PC-9 (cell line): ENCODE measurements at regions of chr2 and their contacts with region 1.

Region 1: GRCh38 chr2:151032741-151033191 is 228.9 kb downstream of the RBM43 start:
- DNase-seq: no peak
- H3K4me3 ChIP-seq: no peak overlapping the region
- H3K27ac ChIP-seq: no peak overlapping the region
- H3K4me1 ChIP-seq: no peaks in the 10 kb centered on the region
- H3K27me3 ChIP-seq: no peaks in the 10 kb centered on the region
- CTCF ChIP-seq: no peak

Region 2: DNA sequence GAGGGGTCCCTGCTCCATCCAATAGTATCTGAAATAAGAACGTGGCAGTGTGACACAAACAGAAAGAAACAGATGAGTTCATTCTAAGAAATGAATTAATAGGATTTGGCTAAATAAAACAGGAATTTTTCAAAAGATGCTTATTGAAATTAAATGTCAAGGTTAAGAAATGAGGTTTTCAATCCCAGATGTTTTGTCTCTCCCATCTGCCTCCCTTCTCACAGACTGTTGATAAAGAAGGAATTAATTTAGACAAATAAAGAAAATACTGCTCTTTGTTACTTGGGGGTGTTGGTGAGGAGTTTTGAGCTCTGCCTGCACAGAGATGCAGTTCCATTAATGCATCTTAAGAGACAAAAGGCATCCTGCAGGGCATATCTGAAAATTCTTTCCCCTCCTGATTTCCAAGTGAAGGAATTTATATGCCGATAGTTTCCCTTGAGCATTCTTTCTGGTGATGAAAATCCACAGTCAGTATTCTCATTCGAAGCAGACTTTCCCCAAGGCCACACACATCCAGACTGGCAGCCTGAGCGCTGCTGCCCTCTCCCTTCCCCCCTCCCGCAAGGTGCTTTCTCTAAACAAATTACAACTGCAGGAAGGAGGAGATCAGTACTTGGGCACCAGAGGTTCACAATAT is 159.9 kb before region 1 on chr2:
- CTCF ChIA-PET with region 1: no interaction called
- POLR2A ChIA-PET with region 1: no interaction called
- intact Hi-C with region 1: no loop called
- DNase-seq: no peak
- H3K4me3 ChIP-seq: no peak overlapping the region
- H3K27ac ChIP-seq: no peak overlapping the region
- H3K4me1 ChIP-seq: no peaks in the 10 kb centered on the region
- H3K27me3 ChIP-seq: no peaks in the 10 kb centered on the region
- CTCF ChIP-seq: no peak

Region 3: DNA sequence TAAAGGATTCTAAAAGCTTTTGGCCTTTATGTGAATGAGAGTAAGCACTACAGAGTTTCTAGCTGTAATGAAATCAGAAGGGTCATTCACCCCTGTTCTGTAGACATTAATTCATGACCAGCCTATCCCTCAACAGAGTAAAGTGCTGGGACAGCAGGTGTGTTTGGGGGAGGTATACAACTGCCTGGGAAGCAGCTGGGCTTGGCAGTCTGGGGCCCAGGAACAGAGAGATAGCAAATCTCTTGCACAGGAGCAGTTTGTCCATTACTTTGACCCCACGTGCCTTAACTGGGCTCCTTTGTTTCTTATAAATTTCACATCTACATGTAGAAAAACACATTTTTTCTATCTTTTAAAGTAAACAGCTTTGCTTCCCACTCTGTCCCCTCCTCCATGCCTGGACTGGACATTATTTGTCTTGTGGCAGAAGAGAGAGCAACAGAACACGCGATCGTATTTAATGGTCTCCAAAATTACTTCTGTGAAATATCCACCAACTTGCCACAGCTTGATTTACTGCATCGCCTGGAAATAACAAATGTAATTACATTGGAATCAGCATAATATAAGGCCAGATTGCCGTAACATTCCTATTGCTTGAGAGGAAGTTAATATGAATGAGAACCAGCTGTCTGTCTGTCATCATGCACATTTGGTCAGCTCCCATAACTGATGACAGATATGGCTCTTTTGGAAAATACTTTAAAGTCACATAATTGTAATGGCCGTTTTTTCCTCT is 34.9 kb before region 1 on chr2:
- CTCF ChIA-PET with region 1: no interaction called
- POLR2A ChIA-PET with region 1: no interaction called
- intact Hi-C with region 1: no loop called
- DNase-seq: no peak
- H3K4me3 ChIP-seq: no peak overlapping the region
- H3K27ac ChIP-seq: no peak overlapping the region
- H3K4me1 ChIP-seq: no peaks in the 10 kb centered on the region
- H3K27me3 ChIP-seq: no peaks in the 10 kb centered on the region
- CTCF ChIP-seq: no peak

Region 4: DNA sequence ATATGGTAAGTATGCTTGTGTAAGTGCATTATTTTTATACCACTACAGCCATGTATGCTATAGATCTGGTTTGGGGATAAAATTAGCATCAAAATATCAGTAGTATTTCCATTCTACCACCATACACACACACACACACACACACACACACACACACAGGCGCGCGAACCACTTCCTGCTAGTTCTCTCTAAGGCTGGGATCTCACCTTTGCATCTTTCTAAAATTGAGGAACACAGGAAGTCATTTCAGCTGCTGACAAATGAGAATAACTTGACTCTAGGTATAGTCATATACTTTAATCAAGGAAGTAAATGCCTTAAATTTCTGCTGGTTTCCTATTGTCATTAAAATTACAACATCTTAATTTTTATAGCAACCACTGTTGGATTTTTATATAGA is 156.4 kb after region 1 on chr2:
- CTCF ChIA-PET with region 1: interaction called, 12 read pairs
- POLR2A ChIA-PET with region 1: no interaction called
- intact Hi-C with region 1: no loop called
- DNase-seq: peak in 1 of 2 experiments; percentile 35
- H3K4me3 ChIP-seq: no peak overlapping the region
- H3K27ac ChIP-seq: no peak overlapping the region
- H3K4me1 ChIP-seq: no peaks in the 10 kb centered on the region
- H3K27me3 ChIP-seq: no peaks in the 10 kb centered on the region
- CTCF ChIP-seq: no peak